Thyroid gland (tissue), 4 donors: ENCODE measurements at regions of chr11 and their contacts with region 1.

Region 1: GRCh38 chr11:12693479-12694181 is 19.4 kb downstream of the TEAD1 start:
- DNase-seq: peak; percentile 44 to 54
- H3K4me3 ChIP-seq: no peak overlapping the region
- H3K27ac ChIP-seq: peak overlapping the region; percentile 91 to 95 (median 92)
- H3K4me1 ChIP-seq: peaks cover 81 to 90% of the 10 kb centered on the region in 2 donors
- H3K27me3 ChIP-seq: no peaks in the 10 kb centered on the region
- CTCF ChIP-seq: no peak
- POLR2A ChIP-seq: peak in 1 of 2 donors; percentile 41

Region 2: DNA sequence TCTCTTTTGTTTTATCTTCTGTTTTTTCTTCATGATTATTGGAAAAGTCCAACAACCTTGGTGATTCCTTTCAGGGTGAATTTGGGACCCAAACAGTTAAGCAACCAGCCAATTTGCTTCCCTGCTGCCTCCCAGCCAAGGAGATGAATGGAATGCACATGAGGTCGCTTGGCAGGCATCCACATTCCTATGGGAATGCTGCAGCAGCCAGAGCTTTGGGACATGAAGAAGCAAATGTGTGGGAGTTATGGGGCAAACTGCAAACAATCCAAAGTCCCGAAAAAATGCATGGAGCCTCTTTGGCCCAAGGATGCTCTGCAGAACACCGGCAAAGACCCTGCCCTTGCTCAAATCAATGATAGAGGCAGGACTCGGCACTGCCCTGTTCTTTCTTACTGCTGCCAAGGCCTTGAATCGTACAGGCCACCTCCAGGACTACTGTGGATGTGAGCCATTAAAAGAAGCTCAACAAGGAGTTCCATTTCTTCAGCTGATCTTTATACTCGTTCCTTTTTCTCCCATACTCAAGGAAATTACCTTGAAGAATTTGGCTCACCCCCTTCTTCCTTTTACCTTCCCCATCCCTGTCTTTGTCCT is 136.7 kb before region 1 on chr11:
- intact Hi-C with region 1: no loop called
- DNase-seq: peak; percentile 67 to 78
- H3K4me3 ChIP-seq: no peak overlapping the region
- H3K27ac ChIP-seq: peak overlapping the region in 1 of 3 donors; percentile 43
- H3K4me1 ChIP-seq: peaks cover 4 to 9% of the 10 kb centered on the region in 2 donors
- H3K27me3 ChIP-seq: no peaks in the 10 kb centered on the region
- CTCF ChIP-seq: no peak
- POLR2A ChIP-seq: no peak

Region 3: DNA sequence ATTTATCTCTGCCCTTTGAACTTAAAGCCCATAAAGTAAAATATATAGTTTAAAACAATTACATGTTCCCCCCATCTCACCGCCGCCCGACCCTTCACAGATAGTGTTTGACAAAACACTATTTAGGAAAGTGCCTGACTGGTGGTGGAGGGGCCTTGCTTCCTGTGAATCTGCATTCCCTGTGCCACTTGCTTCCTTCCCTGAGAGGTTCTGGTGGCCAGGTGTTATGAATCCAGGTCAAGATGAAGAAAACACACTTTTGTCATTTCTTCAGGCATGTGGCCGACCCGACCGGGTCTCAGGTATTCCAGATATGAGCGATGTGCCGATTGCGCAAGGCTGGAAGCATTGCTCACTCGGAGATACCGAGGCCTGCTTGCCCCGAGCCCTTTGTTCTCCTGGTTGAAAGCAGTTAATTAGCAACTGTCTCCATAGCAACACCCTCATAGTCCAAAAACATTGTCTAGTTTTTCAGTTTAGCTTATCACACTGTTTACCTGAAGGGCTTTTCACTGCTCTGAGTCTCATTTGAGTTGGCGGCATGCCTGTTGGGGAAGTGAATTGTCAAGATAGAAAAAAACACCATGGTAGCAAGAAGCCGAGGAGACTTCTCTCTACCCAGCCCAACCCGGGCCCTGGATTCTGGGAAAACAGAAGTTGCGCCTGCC is 108.9 kb after region 1 on chr11:
- intact Hi-C with region 1: loop called (anchors 10 kb)
- DNase-seq: peak; percentile 93 to 94
- H3K4me3 ChIP-seq: no peak overlapping the region
- H3K27ac ChIP-seq: peak overlapping the region; percentile 69 to 92 (median 89)
- H3K4me1 ChIP-seq: peaks cover 57 to 70% of the 10 kb centered on the region in 2 donors
- H3K27me3 ChIP-seq: no peaks in the 10 kb centered on the region
- CTCF ChIP-seq: no peak
- POLR2A ChIP-seq: no peak

Region 4: GRCh38 chr11:12922980-12923507 is 229.4 kb after region 1 on chr11:
- intact Hi-C with region 1: no loop called
- DNase-seq: no peak
- H3K4me3 ChIP-seq: no peak overlapping the region
- H3K27ac ChIP-seq: no peak overlapping the region
- H3K4me1 ChIP-seq: no peaks in the 10 kb centered on the region
- H3K27me3 ChIP-seq: no peaks in the 10 kb centered on the region
- CTCF ChIP-seq: no peak
- POLR2A ChIP-seq: no peak